ENCODE measurements at regions of chr13 and their contacts with region 1.

Region 1: DNA sequence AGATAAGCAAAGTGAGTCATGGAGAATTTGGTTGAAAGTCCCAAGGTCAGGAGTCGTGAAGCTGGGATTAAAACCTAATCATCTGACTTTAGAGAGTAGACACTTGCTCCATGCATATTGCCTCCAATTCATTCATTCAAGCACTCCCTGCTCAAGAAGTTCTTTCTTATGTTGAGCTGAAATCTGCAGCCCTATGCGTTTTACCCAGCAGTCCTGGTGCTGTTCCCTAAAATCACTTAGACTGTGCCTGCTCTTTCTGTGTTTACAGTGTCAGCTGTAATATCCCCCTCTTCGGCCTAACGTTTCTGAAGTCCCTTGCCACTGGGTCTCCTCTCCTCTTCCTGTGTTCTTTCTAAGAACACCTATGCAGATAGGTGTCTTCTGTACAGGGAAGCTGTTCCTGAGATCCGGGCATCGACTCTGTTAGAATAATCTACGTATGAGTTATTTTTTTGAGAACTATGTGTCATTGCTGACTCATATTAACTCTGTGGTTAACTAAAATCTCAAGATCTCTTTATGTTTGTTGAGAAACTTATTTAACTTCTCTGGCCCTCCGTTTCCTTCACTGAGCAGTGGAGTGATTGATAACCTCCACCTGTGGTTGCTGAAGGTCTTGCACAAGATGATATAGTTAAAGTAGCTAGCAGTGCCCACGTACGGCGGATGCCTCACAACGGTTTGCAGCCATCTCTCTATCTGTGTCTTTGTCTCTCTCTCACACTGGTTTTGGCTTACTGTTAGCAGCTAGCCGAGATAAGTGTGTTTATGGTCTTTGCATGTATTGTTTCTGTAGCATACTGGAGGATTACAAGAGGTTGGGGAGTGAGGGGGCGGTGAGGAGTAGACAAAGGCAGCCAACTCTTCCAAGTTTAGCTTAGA is 4.7 kb downstream of the ALOX5AP start:
- DNase-seq: peak; percentile 80
- H3K4me3 Mint-ChIP-seq: peak overlapping the region; percentile 73
- H3K27ac Mint-ChIP-seq: peak overlapping the region; percentile 88
- H3K4me1 Mint-ChIP-seq: peaks cover 78% of the 10 kb centered on the region
- H3K27me3 Mint-ChIP-seq: peaks cover 2% of the 10 kb centered on the region

Region 2: DNA sequence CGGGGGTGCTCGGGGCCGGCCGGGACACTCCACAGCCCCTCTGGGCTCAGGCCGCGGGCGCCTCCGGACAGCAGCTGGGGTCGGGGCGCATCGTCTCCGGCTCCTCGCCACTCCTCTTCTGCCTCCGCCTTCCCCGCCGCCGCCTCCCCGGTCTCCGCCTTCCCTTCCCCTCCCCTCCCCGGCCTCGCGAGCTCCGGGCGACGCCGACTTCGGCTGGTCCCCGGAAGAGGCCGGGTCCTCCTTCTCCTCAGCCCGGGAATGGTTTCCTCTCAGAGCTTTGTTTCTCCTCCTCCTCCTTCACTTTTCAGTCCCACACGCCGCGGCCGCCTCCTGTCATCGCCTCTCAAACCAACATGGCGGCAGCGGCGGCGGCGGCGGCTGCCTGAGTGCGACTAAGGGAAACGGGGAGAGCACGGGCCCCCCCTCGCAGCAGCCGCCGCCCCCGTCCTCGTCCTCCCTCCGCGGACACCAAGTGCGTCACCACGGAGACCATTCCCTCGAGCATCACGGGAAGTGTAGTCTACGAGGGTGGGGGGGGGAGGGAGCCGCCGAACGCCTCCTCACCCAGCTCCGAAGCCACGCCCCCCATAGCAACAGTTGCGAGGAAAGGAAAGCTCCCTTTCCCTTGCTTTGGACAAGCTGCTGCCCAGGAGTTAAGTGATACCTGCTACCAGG is 889.6 kb before region 1 on chr13 and contains the start of gene UBL3:
- CTCF ChIA-PET with region 1: no interaction called
- intact Hi-C with region 1: loop called (anchors 5 kb)
- DNase-seq: peak; percentile 96
- H3K4me3 Mint-ChIP-seq: peak within 1 kb of the TSS; percentile 83
- H3K27ac Mint-ChIP-seq: peak within 1 kb of the TSS; percentile 97
- H3K4me1 Mint-ChIP-seq: peaks cover 28% of the 10 kb centered on the region
- H3K27me3 Mint-ChIP-seq: no peaks in the 10 kb centered on the region
- total RNA-seq, gene UBL3: 8.3 to 8.5 TPM

Region 3: DNA sequence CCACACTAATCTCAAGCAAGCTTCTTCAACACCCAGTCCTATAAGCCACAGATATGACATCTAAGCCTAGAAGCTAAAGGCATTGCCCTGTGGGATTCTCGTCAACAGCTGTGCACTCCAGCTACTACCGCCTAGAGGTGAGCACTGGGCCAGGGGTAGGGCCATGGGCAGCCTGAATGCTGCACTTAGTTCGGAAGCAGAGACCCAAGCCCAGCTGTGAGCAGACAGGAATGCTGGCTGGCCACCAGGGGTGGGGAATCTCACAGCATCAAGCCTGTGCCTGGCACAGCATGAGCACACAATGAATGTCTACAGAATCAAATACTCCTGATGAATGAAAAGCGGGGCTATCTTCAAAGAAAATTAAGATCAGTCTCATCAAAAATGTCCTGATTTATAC is 722.1 kb before region 1 on chr13:
- CTCF ChIA-PET with region 1: no interaction called
- intact Hi-C with region 1: no loop called
- DNase-seq: no peak
- H3K4me3 Mint-ChIP-seq: no peak overlapping the region
- H3K27ac Mint-ChIP-seq: no peak overlapping the region
- H3K4me1 Mint-ChIP-seq: peaks cover 4% of the 10 kb centered on the region
- H3K27me3 Mint-ChIP-seq: no peaks in the 10 kb centered on the region

Region 4: GRCh38 chr13:30306762-30307193 is 433.2 kb before region 1 on chr13:
- CTCF ChIA-PET with region 1: no interaction called
- intact Hi-C with region 1: loop called (anchors 5 kb)
- DNase-seq: peak; percentile 94
- H3K4me3 Mint-ChIP-seq: peak overlapping the region; percentile 83
- H3K27ac Mint-ChIP-seq: peak overlapping the region; percentile 76
- H3K4me1 Mint-ChIP-seq: peaks cover 14% of the 10 kb centered on the region
- H3K27me3 Mint-ChIP-seq: no peaks in the 10 kb centered on the region

Region 5: GRCh38 chr13:30465585-30466357 is 274.2 kb before region 1 on chr13 and contains the start of gene HMGB1:
- CTCF ChIA-PET with region 1: no interaction called
- intact Hi-C with region 1: loop called (anchors 1 kb)
- DNase-seq: peak; percentile 99
- H3K4me3 Mint-ChIP-seq: peak within 1 kb of the TSS; percentile 89
- H3K27ac Mint-ChIP-seq: peak within 1 kb of the TSS; percentile 98
- H3K4me1 Mint-ChIP-seq: peaks cover 15% of the 10 kb centered on the region
- H3K27me3 Mint-ChIP-seq: peaks cover 3% of the 10 kb centered on the region
- total RNA-seq, gene HMGB1: 686 to 722 TPM

Region 6: DNA sequence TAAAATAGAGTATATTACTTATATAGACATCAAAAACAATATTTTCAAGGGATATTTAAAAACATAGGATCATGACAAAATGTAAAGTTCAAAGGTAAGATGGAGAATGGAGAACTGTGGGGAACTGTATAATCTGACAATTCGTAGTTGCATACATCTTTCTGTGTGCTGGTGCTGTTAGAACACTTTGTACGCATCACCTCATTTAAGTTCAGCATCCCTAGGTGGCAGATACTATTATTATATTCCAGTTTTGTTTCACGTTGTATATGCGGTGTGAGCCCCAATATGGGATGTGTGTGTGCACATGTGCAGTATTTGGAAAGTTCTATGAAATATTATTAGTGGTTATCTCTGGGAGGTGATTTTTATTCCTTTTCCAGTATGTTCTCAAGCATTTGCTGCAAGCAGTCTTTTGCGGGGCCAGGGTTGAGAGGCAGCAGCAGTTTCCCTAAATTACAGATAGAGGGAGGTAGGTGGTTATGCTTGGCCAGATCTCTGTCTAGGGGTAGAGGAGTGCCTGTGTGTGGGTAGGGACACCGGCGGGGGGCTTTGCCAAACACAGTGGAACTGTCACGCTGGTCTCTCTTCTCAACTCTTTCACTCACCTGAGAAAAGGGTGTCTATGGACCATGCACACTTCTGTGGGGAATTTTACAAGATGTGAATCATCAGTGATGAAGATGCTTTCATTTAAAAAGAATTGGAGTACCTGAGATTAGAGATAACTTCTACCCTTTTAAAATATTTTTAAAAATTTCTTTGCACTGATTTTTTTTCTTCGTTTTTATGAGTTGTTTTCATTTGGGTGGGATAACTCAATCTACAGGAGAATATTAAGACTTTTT is 60.3 kb before region 1 on chr13:
- CTCF ChIA-PET with region 1: no interaction called
- intact Hi-C with region 1: loop called (anchors 1 kb)
- DNase-seq: peak; percentile 54
- H3K4me3 Mint-ChIP-seq: no peak overlapping the region
- H3K27ac Mint-ChIP-seq: no peak overlapping the region
- H3K4me1 Mint-ChIP-seq: peaks cover 4% of the 10 kb centered on the region
- H3K27me3 Mint-ChIP-seq: no peaks in the 10 kb centered on the region

Region 7: GRCh38 chr13:30752201-30752797 is 12.3 kb after region 1 on chr13:
- CTCF ChIA-PET with region 1: no interaction called
- intact Hi-C with region 1: no loop called
- DNase-seq: no peak
- H3K4me3 Mint-ChIP-seq: no peak overlapping the region
- H3K27ac Mint-ChIP-seq: no peak overlapping the region
- H3K4me1 Mint-ChIP-seq: peaks cover 7% of the 10 kb centered on the region
- H3K27me3 Mint-ChIP-seq: no peaks in the 10 kb centered on the region

Region 8: GRCh38 chr13:31044377-31045285 is 304.6 kb after region 1 on chr13:
- CTCF ChIA-PET with region 1: interaction called, 3 read pairs
- intact Hi-C with region 1: loop called (anchors 1 kb)
- DNase-seq: peak; percentile 93
- H3K4me3 Mint-ChIP-seq: no peak overlapping the region
- H3K27ac Mint-ChIP-seq: peak overlapping the region; percentile 78
- H3K4me1 Mint-ChIP-seq: peaks cover 43% of the 10 kb centered on the region
- H3K27me3 Mint-ChIP-seq: peaks cover 2% of the 10 kb centered on the region